Caco-2 (cell line): ENCODE measurements at regions of chr4 and their contacts with region 1.

Region 1: GRCh38 chr4:110193822-110194761 is 4.3 kb downstream of the ELOVL6 start:
- DNase-seq: peak; percentile 85 to 92
- H3K4me3 ChIP-seq: no peak overlapping the region
- H3K4me3 Mint-ChIP-seq: peak overlapping the region; percentile 54
- H3K27ac Mint-ChIP-seq: peak overlapping the region; percentile 75
- H3K4me1 ChIP-seq: peaks cover 30% of the 10 kb centered on the region
- H3K4me1 Mint-ChIP-seq: peaks cover 7% of the 10 kb centered on the region
- H3K27me3 ChIP-seq: no peaks in the 10 kb centered on the region
- H3K27me3 Mint-ChIP-seq: no peaks in the 10 kb centered on the region
- CTCF ChIP-seq: no peak

Region 2: GRCh38 chr4:110005461-110006056 is 188.5 kb before region 1 on chr4:
- CTCF ChIA-PET with region 1: no interaction called
- POLR2A ChIA-PET with region 1: no interaction called
- intact Hi-C with region 1: loop called (anchors 5 kb)
- DNase-seq: peak in 1 of 2 experiments; percentile 41
- H3K4me3 ChIP-seq: no peak overlapping the region
- H3K4me3 Mint-ChIP-seq: no peak overlapping the region
- H3K27ac Mint-ChIP-seq: no peak overlapping the region
- H3K4me1 ChIP-seq: no peaks in the 10 kb centered on the region; the same call in 1 of the 2 replicates
- H3K4me1 Mint-ChIP-seq: peaks cover 7% of the 10 kb centered on the region
- H3K27me3 ChIP-seq: no peaks in the 10 kb centered on the region
- H3K27me3 Mint-ChIP-seq: no peaks in the 10 kb centered on the region
- CTCF ChIP-seq: peak; percentile 50 to 61

Region 3: DNA sequence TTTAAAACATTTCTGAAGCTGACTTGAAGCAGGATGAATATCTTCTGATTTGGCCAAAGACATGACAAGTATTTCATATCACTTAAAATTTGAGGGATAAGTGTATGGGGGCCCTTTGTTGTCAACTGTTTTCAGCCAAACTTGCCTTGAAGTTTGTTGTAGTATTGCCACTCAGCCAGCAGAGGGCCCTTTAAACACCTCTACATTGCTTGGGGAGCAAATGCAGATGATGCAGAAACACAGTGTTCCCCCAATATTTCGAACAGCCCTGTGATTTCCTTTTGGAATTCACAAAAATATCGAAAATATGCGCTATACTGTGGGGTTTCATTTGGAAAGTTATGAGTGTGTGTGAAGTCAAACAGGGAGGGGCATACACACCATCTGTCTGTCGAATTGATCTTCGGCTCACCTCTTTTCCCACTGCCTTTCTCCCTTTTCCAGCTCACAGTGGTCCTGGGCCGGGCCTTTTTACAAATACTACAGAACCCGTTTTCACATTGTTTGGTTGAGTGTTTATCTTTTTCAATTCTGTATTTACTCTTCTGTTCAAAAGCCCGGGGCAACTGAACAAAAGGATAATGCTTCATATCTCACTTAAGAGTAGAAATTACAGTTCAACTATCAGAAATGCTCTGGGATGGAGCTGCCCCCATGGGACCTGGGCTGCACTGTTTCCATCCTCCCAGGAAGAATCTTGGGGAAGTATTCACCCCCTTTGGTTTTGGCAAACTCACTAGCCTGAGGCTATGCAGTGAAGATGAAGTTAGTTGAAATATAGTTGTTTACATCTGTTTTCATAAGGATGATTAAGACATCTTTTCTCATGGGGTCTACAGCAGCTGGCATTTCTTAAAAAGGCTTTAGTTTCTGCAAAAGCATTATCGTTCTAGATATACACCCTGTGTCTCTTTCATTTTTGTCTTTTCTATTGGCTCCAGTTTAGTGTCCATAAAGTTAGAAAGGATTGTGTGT is 143.9 kb before region 1 on chr4:
- CTCF ChIA-PET with region 1: interaction called, 3 read pairs
- POLR2A ChIA-PET with region 1: no interaction called
- intact Hi-C with region 1: loop called (anchors 2 kb)
- DNase-seq: peak in 1 of 2 experiments; percentile 39
- H3K4me3 ChIP-seq: no peak overlapping the region
- H3K4me3 Mint-ChIP-seq: no peak overlapping the region
- H3K27ac Mint-ChIP-seq: no peak overlapping the region
- H3K4me1 ChIP-seq: no peaks in the 10 kb centered on the region
- H3K4me1 Mint-ChIP-seq: no peaks in the 10 kb centered on the region
- H3K27me3 ChIP-seq: no peaks in the 10 kb centered on the region
- H3K27me3 Mint-ChIP-seq: no peaks in the 10 kb centered on the region
- CTCF ChIP-seq: peak; percentile 70 to 81

Region 4: GRCh38 chr4:110106928-110107296 is 87.2 kb before region 1 on chr4:
- CTCF ChIA-PET with region 1: no interaction called
- POLR2A ChIA-PET with region 1: no interaction called
- intact Hi-C with region 1: loop called (anchors 2 kb)
- DNase-seq: peak in 1 of 2 experiments; percentile 6
- H3K4me3 ChIP-seq: no peak overlapping the region
- H3K4me3 Mint-ChIP-seq: no peak overlapping the region
- H3K27ac Mint-ChIP-seq: peak overlapping the region; percentile 49
- H3K4me1 ChIP-seq: peaks cover 37% of the 10 kb centered on the region
- H3K4me1 Mint-ChIP-seq: peaks cover 9% of the 10 kb centered on the region
- H3K27me3 ChIP-seq: no peaks in the 10 kb centered on the region
- H3K27me3 Mint-ChIP-seq: no peaks in the 10 kb centered on the region
- CTCF ChIP-seq: no peak

Region 5: GRCh38 chr4:110139815-110140214 is 54.3 kb before region 1 on chr4:
- CTCF ChIA-PET with region 1: no interaction called
- POLR2A ChIA-PET with region 1: no interaction called
- intact Hi-C with region 1: loop called (anchors 5 kb)
- DNase-seq: no peak
- H3K4me3 ChIP-seq: no peak overlapping the region
- H3K4me3 Mint-ChIP-seq: no peak overlapping the region
- H3K27ac Mint-ChIP-seq: no peak overlapping the region
- H3K4me1 ChIP-seq: peaks cover 11% of the 10 kb centered on the region
- H3K4me1 Mint-ChIP-seq: peaks cover 17% of the 10 kb centered on the region
- H3K27me3 ChIP-seq: no peaks in the 10 kb centered on the region
- H3K27me3 Mint-ChIP-seq: no peaks in the 10 kb centered on the region
- CTCF ChIP-seq: no peak

Region 6: DNA sequence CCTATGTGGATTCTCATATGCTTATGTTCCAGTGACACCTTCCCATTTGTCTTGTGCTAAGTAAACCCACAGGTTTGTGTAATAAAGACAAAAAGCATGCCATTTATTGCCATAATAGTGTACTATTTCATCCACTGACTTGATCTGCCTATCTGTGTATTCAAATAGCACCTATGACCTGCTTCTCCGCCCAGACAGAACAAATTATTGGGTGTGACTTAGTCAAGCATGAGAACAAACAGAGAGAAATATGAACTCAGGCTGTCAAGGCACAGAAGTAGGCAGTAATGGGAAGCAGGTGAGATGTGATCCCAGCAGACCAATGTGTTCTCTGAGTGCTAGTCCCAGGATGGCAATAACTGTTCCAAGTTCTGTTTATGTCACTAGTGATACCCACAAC is 21.1 kb before region 1 on chr4:
- CTCF ChIA-PET with region 1: no interaction called
- POLR2A ChIA-PET with region 1: no interaction called
- intact Hi-C with region 1: loop called (anchors 2 kb)
- DNase-seq: peak; percentile 27 to 66
- H3K4me3 ChIP-seq: no peak overlapping the region
- H3K4me3 Mint-ChIP-seq: no peak overlapping the region
- H3K27ac Mint-ChIP-seq: peak overlapping the region; percentile 25
- H3K4me1 ChIP-seq: peaks cover 24% of the 10 kb centered on the region
- H3K4me1 Mint-ChIP-seq: peaks cover 15% of the 10 kb centered on the region
- H3K27me3 ChIP-seq: no peaks in the 10 kb centered on the region
- H3K27me3 Mint-ChIP-seq: no peaks in the 10 kb centered on the region
- CTCF ChIP-seq: no peak

Region 7: DNA sequence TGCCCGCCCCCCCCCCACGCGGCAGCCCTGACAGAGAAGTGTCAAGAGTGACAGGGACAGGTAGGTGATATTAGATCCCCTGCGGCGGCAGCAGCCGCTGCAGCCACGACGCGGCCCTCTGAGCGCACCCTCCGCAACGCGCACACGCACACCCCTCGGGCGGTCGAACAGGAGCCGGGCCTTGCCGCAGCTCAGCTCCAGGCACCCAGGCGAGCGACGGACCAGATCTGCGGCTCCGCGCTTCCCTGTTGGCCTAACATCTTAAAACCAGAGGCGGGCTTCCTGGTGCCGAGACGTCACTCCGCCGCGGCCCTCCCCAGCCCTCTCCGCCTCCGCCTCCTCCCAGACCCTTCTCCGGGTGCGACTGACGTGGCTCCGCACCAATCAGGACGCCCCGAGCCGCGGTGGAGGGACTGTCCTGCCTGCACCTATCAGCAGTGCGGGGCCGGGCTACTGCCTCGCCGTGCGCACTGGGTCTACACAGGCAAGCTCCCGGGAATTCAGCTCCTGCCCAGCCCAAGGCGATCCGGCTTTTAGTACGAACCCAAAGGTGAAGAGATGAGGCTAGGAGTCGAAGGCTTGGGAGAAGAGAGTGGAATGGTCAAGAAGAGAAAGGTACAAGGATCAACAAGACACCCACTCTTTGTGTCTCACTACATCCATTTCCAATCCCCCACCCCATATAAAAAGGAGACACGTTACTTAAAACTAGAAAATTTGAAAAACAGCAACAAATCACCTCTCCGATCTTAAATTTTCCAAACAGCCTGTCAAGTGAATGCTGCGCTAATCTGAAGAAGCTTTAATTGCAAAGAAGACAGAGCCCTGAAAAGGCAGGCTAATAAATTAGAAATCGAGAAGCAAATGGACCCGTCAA is 429.0 kb after region 1 on chr4 and contains the start of gene PITX2:
- CTCF ChIA-PET with region 1: no interaction called
- POLR2A ChIA-PET with region 1: no interaction called
- intact Hi-C with region 1: loop called (anchors 10 kb)
- DNase-seq: peak; percentile 99
- H3K4me3 ChIP-seq: peak within 1 kb of the TSS; percentile 58
- H3K4me3 Mint-ChIP-seq: peak within 1 kb of the TSS; percentile 92
- H3K27ac Mint-ChIP-seq: peak within 1 kb of the TSS; percentile 86
- H3K4me1 ChIP-seq: peaks cover 44% of the 10 kb centered on the region
- H3K4me1 Mint-ChIP-seq: peaks cover 47% of the 10 kb centered on the region
- H3K27me3 ChIP-seq: no peaks in the 10 kb centered on the region
- H3K27me3 Mint-ChIP-seq: no peaks in the 10 kb centered on the region
- CTCF ChIP-seq: no peak
- total RNA-seq, gene PITX2: 76.8 and 82.8 TPM in 2 replicates